ENCODE measurements at regions of chr3 and their contacts with region 1.

Region 1: DNA sequence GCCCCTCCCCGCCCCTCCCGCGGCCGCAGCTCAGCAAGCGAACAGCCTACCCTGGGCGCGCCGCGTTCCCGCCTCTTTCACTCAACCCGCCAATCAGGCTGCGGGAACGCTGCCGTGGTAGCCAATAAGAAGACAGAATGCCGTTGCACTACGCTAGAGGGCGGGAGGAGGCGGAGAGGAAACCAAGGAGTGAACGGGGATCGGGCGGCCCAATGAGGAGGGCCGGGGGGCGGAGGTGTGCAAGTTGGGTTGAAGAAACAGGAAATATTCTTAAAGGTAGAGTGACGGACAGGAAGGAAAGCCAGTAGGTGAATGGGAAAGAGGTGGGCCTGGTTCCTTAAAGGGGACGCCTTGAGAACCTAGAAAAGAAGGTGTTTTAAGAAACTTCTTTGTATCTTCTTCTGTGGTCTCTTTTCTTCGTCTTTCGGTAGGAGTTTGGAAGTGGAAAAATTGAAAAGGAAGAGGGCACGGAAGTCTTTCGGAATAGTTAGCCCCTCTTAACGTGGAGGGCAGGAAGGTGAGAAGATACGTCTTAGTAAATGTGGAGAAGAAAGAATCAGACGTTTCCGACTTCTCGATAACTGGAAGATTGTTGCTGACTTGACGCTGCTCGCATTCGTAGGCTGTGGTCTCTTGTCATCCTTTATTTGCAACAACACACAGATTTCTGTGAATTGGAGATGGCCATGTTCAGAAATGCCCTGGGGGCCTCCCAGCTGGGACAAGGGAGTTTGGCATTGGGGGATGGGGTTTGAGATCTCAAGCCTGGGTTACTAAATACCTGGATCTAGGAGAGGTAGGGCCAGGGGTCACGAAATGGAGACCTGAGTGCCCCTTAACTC is 437 bp upstream of the USF3 start:
- DNase-seq: peak; percentile 99
- ATAC-seq: peak; percentile 92
- H3K4me3 Mint-ChIP-seq: no peak overlapping the region
- H3K27ac Mint-ChIP-seq: no peak overlapping the region
- H3K4me1 Mint-ChIP-seq: peaks cover 27% of the 10 kb centered on the region
- H3K27me3 Mint-ChIP-seq: no peaks in the 10 kb centered on the region

Region 2: DNA sequence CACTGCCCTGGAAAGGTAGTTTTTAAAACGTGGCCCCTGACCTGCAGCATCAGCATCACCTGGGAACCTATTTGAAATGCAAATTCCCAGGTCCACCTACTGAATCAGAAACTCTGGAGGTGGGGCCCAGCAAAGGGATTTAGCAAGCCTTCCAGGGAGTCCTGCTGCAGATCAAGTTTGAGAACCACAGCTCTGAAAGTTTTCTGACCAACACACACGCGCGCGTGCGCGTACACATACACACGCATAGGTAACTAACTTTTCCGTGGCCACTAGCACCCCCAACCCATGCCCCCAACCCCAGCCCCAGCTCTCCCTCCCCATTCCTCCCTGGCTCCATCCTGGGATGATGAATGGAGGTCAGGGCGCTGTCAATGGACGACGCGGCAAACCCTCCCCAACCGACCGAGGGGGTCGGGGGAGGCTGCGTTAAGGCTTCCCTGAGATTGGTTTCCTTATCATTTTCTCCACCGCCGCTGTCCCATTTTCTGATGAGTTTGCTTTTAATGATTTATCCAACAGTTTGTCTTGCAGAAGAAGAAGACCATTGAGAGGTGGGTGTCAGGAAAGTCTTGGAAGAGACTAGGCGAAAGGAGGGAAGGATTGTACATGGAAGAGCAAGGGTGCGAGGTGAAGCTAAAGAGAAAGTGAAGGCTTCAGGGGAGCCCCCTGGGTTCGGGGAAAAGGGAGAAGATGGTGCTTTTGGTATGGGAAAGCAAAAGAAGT is 486.1 kb before region 1 on chr3:
- CTCF ChIA-PET with region 1: no interaction called
- POLR2A ChIA-PET with region 1: no interaction called
- intact Hi-C with region 1: no loop called
- DNase-seq: no peak
- ATAC-seq: no peak
- H3K4me3 Mint-ChIP-seq: peak overlapping the region; percentile 77
- H3K27ac Mint-ChIP-seq: no peak overlapping the region
- H3K4me1 Mint-ChIP-seq: peaks cover 13% of the 10 kb centered on the region
- H3K27me3 Mint-ChIP-seq: peaks cover 72% of the 10 kb centered on the region

Region 3: GRCh38 chr3:113514265-113514769 is 182.6 kb before region 1 on chr3:
- CTCF ChIA-PET with region 1: no interaction called
- POLR2A ChIA-PET with region 1: no interaction called
- intact Hi-C with region 1: loop called (anchors 1 to 5 kb)
- DNase-seq: no peak
- ATAC-seq: peak; percentile 30
- H3K4me3 Mint-ChIP-seq: no peak overlapping the region
- H3K27ac Mint-ChIP-seq: no peak overlapping the region
- H3K4me1 Mint-ChIP-seq: peaks cover 10% of the 10 kb centered on the region
- H3K27me3 Mint-ChIP-seq: peaks cover 6% of the 10 kb centered on the region

Region 4: GRCh38 chr3:113531826-113532697 is 164.8 kb before region 1 on chr3 and contains the start of gene SIDT1:
- CTCF ChIA-PET with region 1: interaction called, 3 read pairs
- POLR2A ChIA-PET with region 1: no interaction called
- intact Hi-C with region 1: loop called in 1 of 2 experiments (anchors 1 kb)
- DNase-seq: peak; percentile 85
- ATAC-seq: peak; percentile 78
- H3K4me3 Mint-ChIP-seq: peak within 1 kb of the TSS; percentile 89
- H3K27ac Mint-ChIP-seq: peak within 1 kb of the TSS; percentile 96
- H3K4me1 Mint-ChIP-seq: peaks cover 49% of the 10 kb centered on the region
- H3K27me3 Mint-ChIP-seq: no peaks in the 10 kb centered on the region
- total RNA-seq, gene SIDT1: 19.0 to 19.7 TPM

Region 5: GRCh38 chr3:113769551-113769950 is 72.7 kb after region 1 on chr3:
- CTCF ChIA-PET with region 1: no interaction called
- POLR2A ChIA-PET with region 1: no interaction called
- intact Hi-C with region 1: no loop called
- DNase-seq: no peak
- ATAC-seq: peak; percentile 84
- H3K4me3 Mint-ChIP-seq: no peak overlapping the region
- H3K27ac Mint-ChIP-seq: no peak overlapping the region
- H3K4me1 Mint-ChIP-seq: peaks cover 7% of the 10 kb centered on the region
- H3K27me3 Mint-ChIP-seq: no peaks in the 10 kb centered on the region

Region 6: DNA sequence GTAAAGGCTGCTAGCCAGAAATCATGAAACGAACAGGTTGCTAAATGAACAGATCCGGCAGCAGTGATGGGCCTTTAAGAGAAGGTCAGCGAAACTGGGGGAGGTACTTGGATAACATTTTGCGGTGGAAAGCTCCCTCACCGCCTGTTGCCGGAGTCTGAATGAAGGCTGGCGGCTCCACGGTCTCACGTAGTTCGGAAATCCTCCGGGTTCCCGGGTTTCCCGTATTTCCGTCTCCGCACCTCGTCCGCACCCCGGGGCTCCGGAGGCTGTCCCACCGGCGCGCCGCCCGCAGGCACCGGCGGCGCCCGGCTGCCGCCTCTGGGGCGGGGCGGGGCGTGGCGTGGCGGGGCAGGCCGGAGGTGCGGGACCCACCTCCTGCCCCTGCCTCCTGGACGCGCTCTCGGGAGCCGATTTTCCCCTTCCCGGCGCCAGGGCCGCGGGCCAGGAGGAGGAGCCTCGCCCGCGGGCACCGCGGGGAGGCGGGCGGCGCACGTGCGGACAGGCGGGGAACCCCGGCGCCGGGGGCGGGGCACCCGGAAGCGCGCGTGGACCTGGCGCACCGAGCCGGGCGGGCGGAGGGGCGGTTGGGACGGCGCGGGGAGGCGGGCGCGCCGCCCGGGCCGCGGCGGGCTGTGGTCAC is 250.6 kb after region 1 on chr3 and contains the start of gene ZDHHC23:
- CTCF ChIA-PET with region 1: no interaction called
- POLR2A ChIA-PET with region 1: no interaction called
- intact Hi-C with region 1: loop called in 1 of 2 experiments (anchors 1 kb)
- DNase-seq: peak; percentile 74
- ATAC-seq: peak; percentile 75
- H3K4me3 Mint-ChIP-seq: peak within 1 kb of the TSS; percentile 76
- H3K27ac Mint-ChIP-seq: peak within 1 kb of the TSS; percentile 79
- H3K4me1 Mint-ChIP-seq: peaks cover 11% of the 10 kb centered on the region
- H3K27me3 Mint-ChIP-seq: peaks cover 25% of the 10 kb centered on the region
- total RNA-seq, gene ZDHHC23: 4.5 to 5.1 TPM